ENCODE measurements at regions of chr16 and their contacts with region 1.

Region 1: DNA sequence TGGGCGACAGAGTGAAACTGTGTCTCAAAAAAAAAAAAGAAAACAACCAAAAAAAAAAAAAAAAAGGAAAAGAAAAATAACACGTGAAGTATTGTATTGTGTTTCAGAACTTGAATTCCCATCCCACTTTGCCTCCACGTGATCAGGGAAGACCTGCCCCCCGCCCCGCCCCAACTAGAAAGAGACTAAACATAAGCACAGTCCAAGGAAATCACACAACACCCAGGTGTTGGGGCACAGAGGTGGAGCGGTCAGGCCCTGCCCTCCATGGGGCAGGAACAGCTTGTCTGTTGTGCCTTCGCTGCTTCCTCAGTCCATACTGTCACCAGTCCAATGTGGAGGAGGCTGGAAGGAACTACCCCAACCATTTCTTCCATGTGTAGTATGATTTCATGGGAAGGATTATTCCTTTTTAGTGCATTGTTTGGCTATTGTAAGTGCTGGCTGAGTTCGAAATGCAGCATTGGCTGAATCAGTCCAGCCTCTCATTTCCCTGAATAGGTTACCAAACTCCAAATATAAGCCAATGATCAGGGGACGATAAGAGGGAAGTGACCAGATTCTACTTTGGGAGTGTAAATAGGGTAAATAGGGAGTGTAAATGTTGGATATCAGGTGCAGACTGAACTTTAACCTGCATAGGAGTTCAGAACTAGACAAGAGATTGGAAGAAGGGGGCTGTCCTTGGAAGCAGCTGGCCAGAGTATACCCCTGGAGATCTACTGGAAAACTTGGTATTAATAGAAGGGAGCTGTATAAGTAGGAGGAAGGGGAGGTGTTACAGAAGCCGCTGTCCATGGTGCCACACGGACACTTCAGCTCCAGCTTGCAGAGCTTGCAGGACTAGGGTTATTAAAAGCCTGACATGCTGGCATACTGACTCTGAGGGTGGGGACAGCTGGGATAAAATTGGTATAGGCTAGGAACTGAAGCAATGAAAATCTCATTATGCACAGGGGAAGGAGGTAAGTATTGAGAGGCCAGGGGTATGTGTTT is 50.7 kb downstream of the TANGO6 start:
- ATAC-seq: peak in 4 of 8 experiments; percentile 26 to 69 (median 54)
- H3K4me3 ChIP-seq: no peak overlapping the region
- H3K27ac ChIP-seq: no peak overlapping the region
- H3K4me1 ChIP-seq: no peaks in the 10 kb centered on the region

Region 2: DNA sequence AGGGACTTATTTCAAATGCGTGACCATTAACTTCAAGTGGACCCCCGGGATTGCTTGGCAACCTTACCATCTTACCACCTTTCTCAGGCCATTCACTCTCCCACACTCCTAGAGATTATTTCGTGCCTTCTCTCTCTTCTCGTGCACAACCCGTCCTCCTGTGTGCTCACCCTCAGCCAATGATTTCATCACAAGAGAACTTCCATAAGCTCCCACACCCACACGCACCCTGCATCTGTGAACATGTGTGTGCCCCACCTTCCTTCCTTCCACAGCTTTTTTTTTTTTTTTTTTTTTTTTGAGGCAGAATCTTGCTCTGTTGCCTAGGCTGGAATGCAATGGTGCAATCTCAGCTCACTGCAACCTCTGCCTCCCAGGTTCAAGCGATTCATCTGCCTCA is 276.3 kb before region 1 on chr16:
- in situ Hi-C with region 1: no loop called
- ATAC-seq: peak in 1 of 8 experiments; percentile 98
- H3K4me3 ChIP-seq: no peak overlapping the region
- H3K27ac ChIP-seq: no peak overlapping the region
- H3K4me1 ChIP-seq: no peaks in the 10 kb centered on the region

Region 3: GRCh38 chr16:69132424-69133252 is 238.6 kb after region 1 on chr16 and contains the starts of genes CHTF8 and UTP4:
- in situ Hi-C with region 1: loop called in 1 of 9 experiments (anchors 25 kb)
- ATAC-seq: peak; percentile 85 to 94 (median 92)
- H3K4me3 ChIP-seq: peak within 1 kb of the TSS; percentile 76 to 99 (median 89)
- H3K27ac ChIP-seq: peak within 1 kb of the TSS; percentile 98 to 99
- H3K4me1 ChIP-seq: peaks cover 14 to 15% of the 10 kb centered on the region in 2 donors
- total RNA-seq, gene CHTF8: 29.4 to 111 (median 54.2) TPM
- total RNA-seq, gene UTP4: 13.3 to 71.5 (median 24.4) TPM